CD4-positive, alpha-beta T cell (primary cell): ENCODE measurements at regions of chr14 and their contacts with region 1.

Region 1: DNA sequence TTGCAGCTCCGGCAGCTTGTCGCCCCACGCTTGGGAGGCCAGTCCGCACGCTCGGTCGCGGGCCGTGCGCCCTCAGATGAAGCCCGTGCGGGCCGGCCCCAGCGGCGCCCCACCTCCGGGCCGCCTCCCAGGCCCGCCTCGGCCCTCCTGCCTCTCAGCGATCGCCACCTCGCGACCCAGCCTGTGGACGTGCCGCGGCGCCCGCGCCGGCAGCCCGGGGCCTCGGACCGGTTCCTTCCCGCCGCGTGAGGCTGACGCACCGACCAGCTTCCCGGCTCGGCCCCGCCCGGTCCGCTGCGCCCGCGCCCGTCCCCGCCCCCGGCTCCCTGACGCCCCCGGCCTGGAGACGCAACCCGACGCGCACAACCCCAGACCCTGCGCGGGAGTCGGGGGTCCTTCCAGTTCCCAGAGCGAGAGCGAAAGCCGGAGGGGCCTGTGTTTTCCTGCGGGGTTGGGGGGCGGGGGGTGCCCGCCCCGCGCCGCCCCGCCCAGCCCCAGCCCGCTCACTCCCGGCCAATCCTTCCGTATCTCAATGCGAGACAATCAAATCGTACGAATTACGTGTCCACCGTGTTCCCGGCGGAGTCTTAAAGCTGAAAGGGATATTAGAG is at the start of gene ERO1A:
- DNase-seq: peak in 13 of 14 experiments; percentile 26 to 85 (median 49)
- ATAC-seq: peak; percentile 55
- H3K4me3 ChIP-seq: peak within 1 kb of the TSS; percentile 92
- H3K4me3 Mint-ChIP-seq: peak within 1 kb of the TSS; percentile 99
- H3K27ac ChIP-seq: peak within 1 kb of the TSS; percentile 54 to 91
- H3K27ac Mint-ChIP-seq: peak within 1 kb of the TSS; percentile 89
- H3K4me1 ChIP-seq: peaks cover 31% of the 10 kb centered on the region
- H3K4me1 Mint-ChIP-seq: peaks cover 44% of the 10 kb centered on the region
- H3K27me3 ChIP-seq: no peaks in the 10 kb centered on the region
- H3K27me3 Mint-ChIP-seq: no peaks in the 10 kb centered on the region
- CTCF ChIP-seq: no peak
- total RNA-seq, gene ERO1A: 58.6 to 60.7 TPM

Region 2: DNA sequence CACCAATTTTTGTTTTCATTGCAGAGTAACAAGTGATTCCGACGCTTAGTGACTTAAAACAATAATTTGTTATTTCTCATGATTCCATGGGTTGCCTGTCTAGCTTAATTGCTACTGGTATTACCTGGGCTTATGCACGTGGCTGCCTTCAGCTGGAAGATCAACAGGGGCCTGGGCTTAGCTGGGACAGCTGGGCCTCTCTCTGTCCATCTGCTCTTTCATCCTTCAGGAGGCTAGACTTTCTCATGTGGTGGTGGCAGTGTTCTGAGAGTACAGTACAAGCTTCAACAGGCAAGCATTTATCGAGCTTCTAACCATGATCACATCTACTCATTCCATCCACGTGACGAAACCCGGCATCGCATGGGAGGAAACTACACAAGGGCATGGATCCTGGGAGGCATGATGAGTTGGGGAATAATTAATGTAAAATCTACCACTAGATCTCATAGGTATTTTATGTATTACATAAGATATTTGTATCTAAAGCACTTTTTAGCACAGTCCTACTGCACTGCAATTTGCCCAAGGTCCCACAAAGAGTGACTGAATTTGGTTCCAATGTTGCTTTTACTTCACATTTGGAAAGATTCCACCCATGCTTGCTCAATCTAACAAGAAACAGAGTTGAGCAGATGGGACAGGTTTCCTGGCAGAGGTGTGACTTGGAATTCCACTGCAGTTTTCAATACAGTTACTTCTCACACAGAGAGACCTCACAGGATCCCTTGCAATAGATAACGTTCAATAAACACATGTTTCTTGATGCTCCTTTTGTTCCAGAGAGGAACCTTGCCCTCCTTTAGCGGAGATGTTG is 1197.0 kb before region 1 on chr14:
- CTCF ChIA-PET with region 1: no interaction called
- POLR2A ChIA-PET with region 1: no interaction called
- intact Hi-C with region 1: no loop called
- DNase-seq: no peak
- ATAC-seq: no peak
- H3K4me3 ChIP-seq: no peak overlapping the region
- H3K4me3 Mint-ChIP-seq: no peak overlapping the region
- H3K27ac ChIP-seq: no peak overlapping the region
- H3K27ac Mint-ChIP-seq: no peak overlapping the region
- H3K4me1 ChIP-seq: no peaks in the 10 kb centered on the region
- H3K4me1 Mint-ChIP-seq: no peaks in the 10 kb centered on the region
- H3K27me3 ChIP-seq: peaks cover 0 to 4% of the 10 kb centered on the region in 2 experiments
- H3K27me3 Mint-ChIP-seq: peaks cover 11% of the 10 kb centered on the region
- CTCF ChIP-seq: no peak

Region 3: GRCh38 chr14:52678591-52678990 is 17.0 kb before region 1 on chr14:
- CTCF ChIA-PET with region 1: no interaction called
- POLR2A ChIA-PET with region 1: interaction called, 3 read pairs
- intact Hi-C with region 1: loop called in 1 of 2 experiments (anchors 2 kb)
- DNase-seq: peak in 3 of 14 experiments; percentile 34 to 57 (median 50)
- ATAC-seq: peak; percentile 63
- H3K4me3 ChIP-seq: no peak overlapping the region
- H3K4me3 Mint-ChIP-seq: no peak overlapping the region
- H3K27ac ChIP-seq: no peak overlapping the region
- H3K27ac Mint-ChIP-seq: no peak overlapping the region
- H3K4me1 ChIP-seq: peaks cover 2% of the 10 kb centered on the region
- H3K4me1 Mint-ChIP-seq: peaks cover 10% of the 10 kb centered on the region
- H3K27me3 ChIP-seq: no peaks in the 10 kb centered on the region
- H3K27me3 Mint-ChIP-seq: no peaks in the 10 kb centered on the region
- CTCF ChIP-seq: peak; percentile 51

Region 4: GRCh38 chr14:52706724-52707706 is 11.4 kb after region 1 on chr14 and contains the start of gene PSMC6:
- CTCF ChIA-PET with region 1: interaction called, 3 read pairs
- POLR2A ChIA-PET with region 1: interaction called, 11 read pairs
- intact Hi-C with region 1: no loop called
- DNase-seq: peak; percentile 90 to 97 (median 95)
- ATAC-seq: peak; percentile 98
- H3K4me3 ChIP-seq: peak within 1 kb of the TSS; percentile 72
- H3K4me3 Mint-ChIP-seq: peak within 1 kb of the TSS; percentile 96
- H3K27ac ChIP-seq: peak within 1 kb of the TSS; percentile 71 to 88
- H3K27ac Mint-ChIP-seq: peak within 1 kb of the TSS; percentile 94
- H3K4me1 ChIP-seq: peaks cover 13% of the 10 kb centered on the region
- H3K4me1 Mint-ChIP-seq: peaks cover 48% of the 10 kb centered on the region
- H3K27me3 ChIP-seq: no peaks in the 10 kb centered on the region
- H3K27me3 Mint-ChIP-seq: no peaks in the 10 kb centered on the region
- CTCF ChIP-seq: no peak
- total RNA-seq, gene PSMC6: 110 to 111 TPM

Region 5: GRCh38 chr14:52729925-52730667 is 34.5 kb after region 1 on chr14 and contains the start of gene STYX:
- CTCF ChIA-PET with region 1: no interaction called
- POLR2A ChIA-PET with region 1: interaction called, 6 read pairs
- intact Hi-C with region 1: loop called (anchors 5 kb)
- DNase-seq: peak; percentile 94 to 100 (median 98)
- ATAC-seq: peak; percentile 95
- H3K4me3 ChIP-seq: peak within 1 kb of the TSS; percentile 100
- H3K4me3 Mint-ChIP-seq: peak within 1 kb of the TSS; percentile 93
- H3K27ac ChIP-seq: peak within 1 kb of the TSS; percentile 84 to 89
- H3K27ac Mint-ChIP-seq: peak within 1 kb of the TSS; percentile 94
- H3K4me1 ChIP-seq: peaks cover 36% of the 10 kb centered on the region
- H3K4me1 Mint-ChIP-seq: peaks cover 36% of the 10 kb centered on the region
- H3K27me3 ChIP-seq: no peaks in the 10 kb centered on the region
- H3K27me3 Mint-ChIP-seq: no peaks in the 10 kb centered on the region
- CTCF ChIP-seq: no peak
- total RNA-seq, gene STYX: 15.3 to 16.2 TPM

Region 6: GRCh38 chr14:52735921-52736489 is 40.4 kb after region 1 on chr14:
- CTCF ChIA-PET with region 1: no interaction called
- POLR2A ChIA-PET with region 1: interaction called, 42 read pairs
- intact Hi-C with region 1: loop called (anchors 5 kb)
- DNase-seq: no peak
- ATAC-seq: no peak
- H3K4me3 ChIP-seq: no peak overlapping the region
- H3K4me3 Mint-ChIP-seq: peak overlapping the region; percentile 26
- H3K27ac ChIP-seq: no peak overlapping the region
- H3K27ac Mint-ChIP-seq: peak overlapping the region; percentile 53
- H3K4me1 ChIP-seq: peaks cover 43% of the 10 kb centered on the region
- H3K4me1 Mint-ChIP-seq: peaks cover 74% of the 10 kb centered on the region
- H3K27me3 ChIP-seq: no peaks in the 10 kb centered on the region
- H3K27me3 Mint-ChIP-seq: no peaks in the 10 kb centered on the region
- CTCF ChIP-seq: no peak